ENCODE measurements at regions of chr12 and their contacts with region 1.

Region 1: DNA sequence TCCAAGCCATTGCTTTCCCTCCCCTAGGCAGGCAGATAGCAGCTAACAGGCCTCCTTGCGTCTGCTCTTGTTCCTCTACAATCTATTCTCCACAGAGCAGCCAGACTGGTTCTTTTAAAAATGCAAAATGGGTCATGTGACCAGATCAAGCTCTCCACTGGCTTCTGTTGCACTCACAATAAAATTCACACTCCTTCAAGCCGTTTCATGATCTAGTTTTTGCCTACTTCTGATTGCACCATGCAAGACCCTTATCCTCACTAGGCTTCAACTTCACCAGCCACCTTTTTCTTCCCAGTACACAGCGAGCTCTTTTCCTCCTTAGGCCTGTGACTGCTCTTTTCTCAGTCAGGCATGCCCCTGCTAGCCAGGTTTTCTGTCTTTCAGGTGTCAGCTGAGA is 6.1 kb upstream of the KRAS start:
- DNase-seq: no peak
- ATAC-seq: peak; percentile 78
- H3K4me3 Mint-ChIP-seq: no peak overlapping the region; the same call in 1 of the 2 replicates
- H3K27ac Mint-ChIP-seq: peak overlapping the region; percentile 86
- H3K4me1 Mint-ChIP-seq: peaks cover 34% of the 10 kb centered on the region
- H3K27me3 Mint-ChIP-seq: peaks cover 18% of the 10 kb centered on the region
- CTCF ChIP-seq: no peak

Region 2: GRCh38 chr12:25241167-25242020 is 15.4 kb before region 1 on chr12:
- CTCF ChIA-PET with region 1: interaction called, 11 read pairs
- POLR2A ChIA-PET with region 1: no interaction called
- DNase-seq: no peak
- ATAC-seq: no peak
- H3K4me3 Mint-ChIP-seq: no peak overlapping the region
- H3K27ac Mint-ChIP-seq: no peak overlapping the region
- H3K4me1 Mint-ChIP-seq: peaks cover 2% of the 10 kb centered on the region
- H3K27me3 Mint-ChIP-seq: no peaks in the 10 kb centered on the region
- CTCF ChIP-seq: no peak

Region 3: DNA sequence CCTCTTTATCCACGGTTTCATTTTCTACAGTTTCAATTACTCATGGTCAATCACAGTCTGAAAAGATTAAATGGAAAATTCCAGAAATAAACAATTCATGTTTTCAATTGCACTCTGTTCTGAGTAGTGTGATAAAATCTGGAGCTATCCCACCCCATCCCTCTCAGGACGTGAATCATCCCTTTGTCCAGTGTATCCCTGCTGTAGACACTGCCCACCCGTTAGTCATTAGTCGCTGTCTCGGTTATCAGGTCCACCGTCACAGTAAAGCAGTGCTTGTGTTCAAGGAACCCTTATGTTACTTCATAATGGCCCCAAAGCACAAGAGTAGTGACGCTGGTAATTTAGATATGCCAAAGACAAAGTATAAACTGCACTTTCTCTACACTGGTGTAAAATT is 437.2 kb after region 1 on chr12:
- CTCF ChIA-PET with region 1: no interaction called
- POLR2A ChIA-PET with region 1: no interaction called
- DNase-seq: no peak
- ATAC-seq: no peak
- H3K4me3 Mint-ChIP-seq: no peak overlapping the region
- H3K27ac Mint-ChIP-seq: no peak overlapping the region
- H3K4me1 Mint-ChIP-seq: peaks cover 37% of the 10 kb centered on the region
- H3K27me3 Mint-ChIP-seq: no peaks in the 10 kb centered on the region
- CTCF ChIP-seq: no peak

Measured in WTC11 (cell line).